K562 (cell line): ENCODE measurements at regions of chrX and their contacts with region 1.

Region 1: DNA sequence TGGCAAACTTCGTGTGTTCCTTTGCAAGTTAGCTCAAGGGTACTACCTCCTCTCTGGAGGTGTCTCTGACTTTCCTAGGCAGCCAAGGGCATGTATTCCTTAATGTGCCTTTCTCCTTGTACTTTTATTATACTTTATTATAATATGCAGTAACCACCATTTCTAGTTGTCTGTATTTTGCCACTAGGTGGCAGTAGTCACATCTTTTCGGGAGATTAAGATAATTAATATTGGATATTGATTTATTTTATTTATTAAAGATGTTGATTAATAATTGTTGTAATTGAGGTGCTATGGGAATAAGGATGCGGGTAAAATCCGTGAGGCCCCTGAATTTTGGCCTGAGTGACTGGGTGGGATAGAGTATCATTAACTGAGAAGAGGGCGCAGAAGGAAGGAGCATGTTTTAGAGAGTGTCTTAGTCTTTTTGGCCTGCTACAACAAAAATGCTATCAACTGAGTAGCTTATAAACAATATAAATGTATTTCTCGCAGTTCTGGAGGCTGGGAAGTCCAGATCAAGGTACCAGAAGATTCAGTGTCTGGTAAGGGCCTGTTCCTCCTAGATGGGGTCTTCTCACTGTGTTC is 153.3 kb downstream of the TMEM164 start:
- DNase-seq: peak in 1 of 4 experiments; percentile 23
- ATAC-seq: no peak
- H3K4me3 ChIP-seq: no peak overlapping the region
- H3K27ac ChIP-seq: no peak overlapping the region
- H3K4me1 ChIP-seq: peaks cover 7 to 30% of the 10 kb centered on the region in 2 experiments; a peak in 3 of 5 replicates
- H3K27me3 ChIP-seq: no peaks in the 10 kb centered on the region
- CTCF ChIP-seq: peak in 2 of 3 experiments; percentile 28 to 56; a peak in 4 of 6 replicates
- EP300 ChIP-seq: no peak
- POLR2A ChIP-seq: no peak
- RAD21 ChIP-seq: peak; percentile 13 to 21; a peak in 1 of 4 replicates

Region 2: DNA sequence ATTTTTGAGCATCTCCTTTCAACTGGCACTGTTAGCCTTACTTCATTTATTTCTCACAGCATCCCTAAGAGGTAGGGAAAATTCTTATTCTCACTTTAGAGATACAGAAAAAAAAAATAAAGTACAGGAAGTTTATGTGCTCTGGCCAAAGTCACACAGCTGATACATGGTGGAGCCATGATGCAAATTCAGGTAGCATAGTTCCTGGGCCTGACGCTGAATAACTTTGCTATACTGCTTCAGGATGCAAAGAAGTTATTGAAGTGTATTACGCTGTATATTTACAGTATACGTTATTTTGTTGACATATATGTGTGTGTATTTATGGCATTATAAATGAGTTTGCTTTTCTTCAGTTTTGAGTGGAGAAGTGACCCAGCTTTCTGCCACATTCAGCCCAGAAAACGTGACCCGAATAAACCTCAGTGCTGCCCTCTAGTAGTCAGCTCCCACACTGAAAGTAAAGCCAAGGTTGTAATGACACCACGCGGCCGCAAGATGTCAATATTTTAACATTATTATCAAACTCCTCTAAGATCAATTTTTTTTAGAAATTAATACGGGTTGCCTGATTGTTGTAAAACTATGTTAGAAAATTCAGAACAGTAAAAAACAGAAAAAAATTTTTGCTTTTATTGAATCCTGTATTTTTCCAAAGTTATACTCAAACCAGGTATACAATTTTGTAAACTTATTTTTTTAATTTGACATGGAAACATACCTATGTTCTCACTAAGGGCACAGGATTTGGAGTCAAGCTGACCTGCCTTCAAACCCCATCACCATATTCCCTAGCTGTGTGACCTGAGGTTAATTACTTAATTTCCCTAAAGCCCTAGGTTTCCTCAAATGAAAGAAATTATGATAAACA is 670.6 kb before region 1 on chrX:
- CTCF ChIA-PET with region 1: no interaction called
- POLR2A ChIA-PET with region 1: no interaction called
- in situ Hi-C with region 1: no loop called
- intact Hi-C with region 1: loop called (anchors 10 kb)
- DNase-seq: peak; percentile 51 to 73 (median 64)
- ATAC-seq: peak; percentile 68
- H3K4me3 ChIP-seq: no peak overlapping the region
- H3K27ac ChIP-seq: no peak overlapping the region
- H3K4me1 ChIP-seq: no peaks in the 10 kb centered on the region
- H3K27me3 ChIP-seq: no peaks in the 10 kb centered on the region
- CTCF ChIP-seq: peak; percentile 91 to 99 (median 99)
- EP300 ChIP-seq: no peak
- POLR2A ChIP-seq: no peak
- RAD21 ChIP-seq: peak; percentile 79 to 82

Region 3: DNA sequence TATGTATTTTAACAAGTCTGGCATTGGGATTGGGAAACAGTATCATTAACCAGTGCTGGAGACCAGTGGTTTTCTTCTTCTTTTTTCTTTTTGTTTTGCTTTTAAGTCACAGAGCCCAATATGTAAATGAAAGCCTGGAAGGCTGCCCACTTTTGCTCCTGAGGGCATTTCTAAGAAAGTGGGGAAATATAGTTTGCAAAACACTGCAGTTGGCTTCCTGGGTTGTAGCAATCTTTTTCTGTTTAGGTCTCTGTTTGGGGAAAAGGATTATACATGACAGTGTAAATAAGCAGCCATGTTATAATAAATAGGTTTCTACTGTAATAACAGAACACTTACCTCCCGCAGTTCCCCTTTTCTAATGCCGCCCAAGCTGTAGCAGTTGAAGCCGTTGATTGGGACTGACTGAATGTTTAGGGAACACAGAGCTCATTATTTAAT is 47.9 kb before region 1 on chrX:
- CTCF ChIA-PET with region 1: no interaction called
- POLR2A ChIA-PET with region 1: no interaction called
- in situ Hi-C with region 1: no loop called
- intact Hi-C with region 1: no loop called
- DNase-seq: no peak
- ATAC-seq: no peak
- H3K4me3 ChIP-seq: no peak overlapping the region
- H3K27ac ChIP-seq: no peak overlapping the region
- H3K4me1 ChIP-seq: no peaks in the 10 kb centered on the region; a peak in 3 of 5 replicates
- H3K27me3 ChIP-seq: no peaks in the 10 kb centered on the region
- CTCF ChIP-seq: no peak
- EP300 ChIP-seq: no peak
- POLR2A ChIP-seq: no peak
- RAD21 ChIP-seq: no peak

Region 4: GRCh38 chrX:110346681-110347080 is 190.4 kb after region 1 on chrX:
- CTCF ChIA-PET with region 1: no interaction called
- POLR2A ChIA-PET with region 1: no interaction called
- in situ Hi-C with region 1: no loop called
- intact Hi-C with region 1: loop called (anchors 2 kb)
- DNase-seq: peak in 2 of 4 experiments; percentile 18 to 73
- ATAC-seq: peak; percentile 94
- H3K4me3 ChIP-seq: 0 out of 2 replicates have a peak overlapping the region, but pooled peaks have one; percentile 9
- H3K27ac ChIP-seq: no peak overlapping the region; the same call in 2 of the 3 replicates
- H3K4me1 ChIP-seq: peaks cover 0 to 3% of the 10 kb centered on the region in 2 experiments; a peak in 3 of 5 replicates
- H3K27me3 ChIP-seq: no peaks in the 10 kb centered on the region
- CTCF ChIP-seq: peak; percentile 39 to 51 (median 49); a peak in 4 of 6 replicates
- EP300 ChIP-seq: no peak
- POLR2A ChIP-seq: no peak
- RAD21 ChIP-seq: peak in 1 of 2 experiments; percentile 71; a peak in 2 of 4 replicates

Region 5: DNA sequence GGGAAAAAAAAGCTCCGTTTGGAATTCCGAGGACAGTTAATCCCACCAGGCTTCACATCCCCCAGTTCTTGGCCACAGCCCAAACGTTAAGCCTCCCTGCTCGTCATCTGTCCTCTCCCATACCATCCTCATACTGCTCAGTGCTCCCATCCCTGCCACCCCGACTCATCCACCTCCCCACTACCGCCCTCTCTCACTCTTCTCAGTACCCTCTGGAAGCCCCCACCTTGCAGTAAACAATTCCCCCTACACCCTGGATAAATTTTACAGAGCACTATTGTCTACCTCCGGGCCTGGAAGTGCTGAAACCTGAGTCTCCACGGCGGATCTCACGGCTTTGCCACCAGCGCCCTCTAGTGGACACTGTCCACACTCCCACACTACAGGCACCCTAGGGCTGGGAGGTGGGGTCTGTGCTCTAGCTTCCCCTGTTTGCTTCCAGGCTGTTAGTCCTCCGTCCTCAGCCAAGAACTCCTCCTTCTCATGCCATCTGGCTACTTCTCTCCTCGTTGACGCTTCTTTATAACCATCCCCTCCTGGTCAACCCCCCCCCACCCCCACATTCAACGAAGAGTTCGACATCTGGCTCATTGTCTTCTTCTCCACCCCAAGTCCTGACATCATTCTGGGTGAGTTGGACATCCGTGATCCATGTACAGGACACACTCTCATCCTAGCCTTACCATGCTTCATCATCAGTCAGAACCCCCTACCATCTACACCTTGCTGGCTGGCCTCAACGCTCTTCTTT is 256.9 kb after region 1 on chrX:
- CTCF ChIA-PET with region 1: interaction called, 39 read pairs
- POLR2A ChIA-PET with region 1: interaction called, 8 read pairs
- in situ Hi-C with region 1: loop called (anchors 5 kb)
- intact Hi-C with region 1: loop called (anchors 1 kb)
- DNase-seq: peak; percentile 82 to 89 (median 84)
- ATAC-seq: peak; percentile 91
- H3K4me3 ChIP-seq: no peak overlapping the region
- H3K27ac ChIP-seq: no peak overlapping the region
- H3K4me1 ChIP-seq: peaks cover 32 to 37% of the 10 kb centered on the region in 2 experiments; a peak in 4 of 5 replicates
- H3K27me3 ChIP-seq: no peaks in the 10 kb centered on the region
- CTCF ChIP-seq: peak; percentile 84 to 89 (median 85)
- EP300 ChIP-seq: no peak
- POLR2A ChIP-seq: no peak
- RAD21 ChIP-seq: peak; percentile 65 to 81

Region 6: GRCh38 chrX:110847334-110847733 is 691.1 kb after region 1 on chrX:
- CTCF ChIA-PET with region 1: no interaction called
- POLR2A ChIA-PET with region 1: no interaction called
- in situ Hi-C with region 1: loop called (anchors 25 kb)
- intact Hi-C with region 1: loop called (anchors 10 kb)
- DNase-seq: peak; percentile 36 to 67 (median 47)
- ATAC-seq: peak; percentile 91
- H3K4me3 ChIP-seq: no peak overlapping the region
- H3K27ac ChIP-seq: no peak overlapping the region
- H3K4me1 ChIP-seq: no peaks in the 10 kb centered on the region; a peak in 1 of 5 replicates
- H3K27me3 ChIP-seq: no peaks in the 10 kb centered on the region
- CTCF ChIP-seq: peak; percentile 29 to 63 (median 46); a peak in 4 of 6 replicates
- EP300 ChIP-seq: no peak
- POLR2A ChIP-seq: no peak
- RAD21 ChIP-seq: peak; percentile 44 to 64